Activated CD4-positive, alpha-beta memory T cell treated with anti-CD3 and anti-CD28 coated beads for 36 hours (primary cell): ENCODE measurements at regions of chr11 and their contacts with region 1.

Region 1: DNA sequence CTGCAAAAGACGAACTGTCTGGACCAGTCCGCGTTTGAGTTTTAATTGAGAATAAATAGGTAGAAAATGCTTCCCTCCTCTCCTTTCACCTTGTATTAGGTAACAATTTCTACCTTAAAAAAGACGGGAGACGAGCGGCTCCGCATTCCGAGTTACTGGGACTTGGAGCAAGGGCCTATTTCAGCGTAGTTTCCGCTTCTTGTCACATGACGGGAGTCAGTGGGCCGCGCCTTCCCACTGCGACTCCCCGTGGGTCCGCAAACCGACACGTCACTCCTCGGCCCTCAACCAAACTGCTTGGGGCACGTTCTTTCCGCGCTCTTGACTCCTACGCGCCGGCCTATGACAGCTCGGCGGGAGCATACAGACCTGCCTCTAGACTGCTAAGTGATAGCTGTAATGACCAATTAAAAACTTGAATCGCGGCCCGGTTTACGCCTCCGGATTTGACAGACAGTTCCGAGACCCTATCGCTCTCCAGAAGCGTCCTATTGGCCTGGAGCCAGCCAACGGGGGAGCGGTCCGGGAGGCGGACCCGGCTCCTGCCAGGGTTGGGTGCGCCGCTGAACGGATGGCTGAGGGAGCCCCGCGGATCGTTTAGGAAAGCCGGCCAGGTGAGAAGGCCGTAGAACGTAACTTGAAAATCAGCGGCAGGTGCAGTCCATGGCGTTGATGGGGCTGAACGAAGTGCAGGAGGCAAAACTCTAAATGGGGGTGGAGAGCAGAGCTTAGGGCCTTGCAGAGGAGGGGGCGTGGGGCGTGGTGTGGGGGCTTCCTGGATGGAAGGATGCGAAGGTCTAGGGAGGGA is at the start of gene STT3A:
- DNase-seq: peak; percentile 99
- H3K4me3 Mint-ChIP-seq: peak within 1 kb of the TSS; percentile 94
- H3K27ac Mint-ChIP-seq: peak within 1 kb of the TSS; percentile 95
- H3K4me1 Mint-ChIP-seq: peaks cover 44% of the 10 kb centered on the region
- H3K27me3 Mint-ChIP-seq: no peaks in the 10 kb centered on the region
- total RNA-seq, gene STT3A: 121 to 132 TPM

Region 2: GRCh38 chr11:123741159-123742028 is 1851.1 kb before region 1 on chr11 and contains the start of gene ZNF202:
- CTCF ChIA-PET with region 1: no interaction called
- POLR2A ChIA-PET with region 1: no interaction called
- intact Hi-C with region 1: loop called (anchors 5 kb)
- DNase-seq: peak; percentile 95
- H3K4me3 Mint-ChIP-seq: peak within 1 kb of the TSS; percentile 97
- H3K27ac Mint-ChIP-seq: peak within 1 kb of the TSS; percentile 83
- H3K4me1 Mint-ChIP-seq: peaks cover 34% of the 10 kb centered on the region
- H3K27me3 Mint-ChIP-seq: no peaks in the 10 kb centered on the region
- total RNA-seq, gene ZNF202: 7.8 to 7.9 TPM

Region 3: DNA sequence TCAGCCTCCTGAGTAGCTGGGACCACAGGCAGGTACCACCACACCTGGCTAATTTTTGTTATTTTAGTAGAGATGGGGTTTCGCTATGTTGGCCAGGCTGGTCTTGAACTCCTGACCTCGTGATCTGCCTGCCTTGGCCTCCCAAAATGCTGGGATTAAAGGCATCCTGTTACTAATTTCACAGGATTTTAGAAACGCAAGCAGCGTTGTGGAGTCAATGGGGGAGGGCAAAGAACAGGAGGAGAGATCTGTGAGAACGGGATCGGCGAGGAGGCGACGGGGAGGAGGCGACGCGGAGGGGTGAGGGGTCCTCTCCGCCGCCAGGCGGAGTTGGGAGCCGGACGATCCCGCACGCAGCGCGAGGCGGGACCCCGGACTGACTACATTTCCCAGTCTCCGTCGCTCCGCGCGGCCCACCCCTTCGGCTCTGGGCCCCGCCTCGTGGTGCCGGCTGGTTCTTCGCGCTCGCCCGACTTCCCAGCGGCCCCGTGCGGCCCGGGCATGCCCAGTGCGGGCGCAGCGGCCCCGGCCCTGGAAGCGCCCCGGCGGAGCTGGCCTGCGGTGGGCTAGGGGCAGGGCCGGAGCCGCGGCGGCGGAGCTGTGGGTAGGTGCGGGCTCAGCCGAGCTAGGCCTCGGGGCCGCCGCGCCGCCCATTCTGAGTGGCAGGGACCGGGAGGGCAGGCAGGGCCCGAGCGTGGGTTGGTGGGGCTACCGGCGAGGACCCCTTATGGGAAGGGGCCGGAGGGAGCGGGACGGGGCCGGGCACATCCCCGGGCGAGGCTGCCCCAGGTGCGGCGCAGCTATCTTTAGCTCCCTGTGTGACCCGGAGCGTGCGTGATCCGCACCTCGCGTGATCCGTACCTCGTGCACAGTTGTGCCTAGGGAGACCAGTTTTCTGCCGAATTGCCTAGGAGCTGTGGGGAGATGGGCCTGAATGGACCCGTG is 23.3 kb before region 1 on chr11 and contains the start of gene EI24:
- CTCF ChIA-PET with region 1: interaction called, 18 read pairs
- POLR2A ChIA-PET with region 1: interaction called, 72 read pairs
- intact Hi-C with region 1: loop called (anchors 1 kb)
- DNase-seq: peak; percentile 93
- H3K4me3 Mint-ChIP-seq: peak within 1 kb of the TSS; percentile 92
- H3K27ac Mint-ChIP-seq: peak within 1 kb of the TSS; percentile 91
- H3K4me1 Mint-ChIP-seq: peaks cover 21% of the 10 kb centered on the region
- H3K27me3 Mint-ChIP-seq: no peaks in the 10 kb centered on the region
- total RNA-seq, gene EI24: 28.7 to 29.1 TPM

Region 4: GRCh38 chr11:125887373-125888324 is 295.1 kb after region 1 on chr11 and contains the start of gene HYLS1:
- CTCF ChIA-PET with region 1: interaction called, 4 read pairs
- POLR2A ChIA-PET with region 1: interaction called, 6 read pairs
- intact Hi-C with region 1: loop called (anchors 1 kb)
- DNase-seq: peak; percentile 99
- H3K4me3 Mint-ChIP-seq: peak within 1 kb of the TSS; percentile 74
- H3K27ac Mint-ChIP-seq: peak within 1 kb of the TSS; percentile 93
- H3K4me1 Mint-ChIP-seq: peaks cover 31% of the 10 kb centered on the region
- H3K27me3 Mint-ChIP-seq: peaks cover 6% of the 10 kb centered on the region
- total RNA-seq, gene HYLS1: 8.2 to 8.3 TPM

Region 5: GRCh38 chr11:126268708-126269579 is 676.4 kb after region 1 on chr11 and contains the starts of genes FOXRED1 and SRPRA:
- CTCF ChIA-PET with region 1: no interaction called
- POLR2A ChIA-PET with region 1: no interaction called
- intact Hi-C with region 1: loop called (anchors 5 kb)
- DNase-seq: peak; percentile 100
- H3K4me3 Mint-ChIP-seq: peak within 1 kb of the TSS; percentile 92
- H3K27ac Mint-ChIP-seq: peak within 1 kb of the TSS; percentile 94
- H3K4me1 Mint-ChIP-seq: peaks cover 33% of the 10 kb centered on the region
- H3K27me3 Mint-ChIP-seq: no peaks in the 10 kb centered on the region
- total RNA-seq, gene FOXRED1: 41.7 to 42.3 TPM
- total RNA-seq, gene SRPRA: 142 to 149 TPM